ENCODE measurements at regions of chr18 and their contacts with region 1.

Region 1: DNA sequence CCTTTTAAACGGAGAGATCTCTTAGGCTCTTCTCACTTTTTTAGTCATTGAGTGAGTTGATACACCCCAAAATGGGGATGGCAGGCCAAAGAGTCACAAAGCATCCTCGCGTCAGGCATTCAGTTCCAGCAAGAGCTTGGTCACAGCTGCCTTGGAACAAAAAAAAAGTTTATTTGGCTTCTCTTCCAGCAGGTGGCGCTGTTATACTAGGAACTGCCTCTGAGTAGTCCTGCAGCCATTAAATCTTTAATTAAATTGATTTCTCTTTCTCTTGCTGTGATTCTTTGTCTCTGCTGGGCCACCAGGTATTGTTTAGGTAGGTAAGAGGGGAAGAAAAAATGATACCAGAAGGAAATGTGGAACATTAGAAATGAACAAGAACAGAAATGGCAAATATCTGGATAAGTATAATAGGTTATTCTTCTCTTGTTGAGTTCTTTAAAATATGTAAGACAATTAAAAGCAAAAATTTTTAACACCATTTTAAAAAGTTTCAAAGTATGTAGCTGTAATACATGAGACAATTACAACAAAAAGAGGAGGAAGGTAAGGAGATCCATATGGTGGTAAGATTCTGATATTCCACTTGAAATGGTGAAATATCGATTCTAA is 175.1 kb downstream of the GALNT1 start:
- DNase-seq: peak in 1 of 3 donors; percentile 60
- ATAC-seq: peak; percentile 77
- H3K4me3 ChIP-seq: no peak overlapping the region
- H3K4me1 ChIP-seq: no peaks in the 10 kb centered on the region
- CTCF ChIP-seq: peak; percentile 34

Region 2: GRCh38 chr18:35683021-35683420 is 73.6 kb before region 1 on chr18:
- intact Hi-C with region 1: no loop called
- DNase-seq: no peak
- ATAC-seq: no peak
- H3K4me3 ChIP-seq: no peak overlapping the region
- H3K4me1 ChIP-seq: no peaks in the 10 kb centered on the region
- CTCF ChIP-seq: no peak

Region 3: DNA sequence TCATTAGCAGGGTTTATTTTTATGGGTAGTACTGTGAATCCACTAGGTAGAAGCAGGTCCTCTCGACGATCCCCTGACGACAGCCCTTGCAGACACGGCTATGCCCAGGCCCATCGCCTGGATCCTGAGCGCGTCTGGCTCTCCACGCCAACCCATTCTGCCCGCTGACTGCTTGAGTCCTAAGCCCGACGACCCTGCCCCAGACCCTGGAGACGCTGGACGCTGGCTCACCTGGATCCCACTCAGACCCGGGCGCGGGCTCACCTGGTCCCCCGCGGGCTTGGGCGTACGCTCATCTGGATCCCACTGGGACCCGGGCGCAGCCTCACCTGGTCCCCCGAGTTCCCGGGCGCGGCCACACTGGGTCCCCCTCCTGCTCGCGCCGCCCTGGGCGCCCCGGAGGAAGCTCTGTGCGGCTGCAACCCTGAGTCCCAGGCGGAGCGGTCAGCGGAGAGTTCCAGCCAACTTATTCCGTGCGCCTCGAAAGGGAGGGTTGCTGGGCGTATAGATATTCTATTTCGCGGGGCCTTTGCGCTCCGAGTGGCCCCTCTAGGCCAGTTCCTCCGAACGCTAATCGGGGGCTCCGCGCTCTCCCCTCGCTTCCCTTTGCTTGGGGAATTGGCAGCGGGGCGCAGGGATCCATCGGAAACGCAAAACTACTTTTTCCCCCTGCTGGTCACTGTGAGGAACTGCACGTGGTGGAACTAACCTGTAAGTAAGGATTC is 193.5 kb after region 1 on chr18:
- intact Hi-C with region 1: loop called in 1 of 2 experiments (anchors 10 kb)
- DNase-seq: peak in 2 of 3 donors; percentile 47 to 63
- ATAC-seq: peak; percentile 79
- H3K4me3 ChIP-seq: no peak overlapping the region
- H3K4me1 ChIP-seq: no peaks in the 10 kb centered on the region
- CTCF ChIP-seq: peak; percentile 87

Region 4: DNA sequence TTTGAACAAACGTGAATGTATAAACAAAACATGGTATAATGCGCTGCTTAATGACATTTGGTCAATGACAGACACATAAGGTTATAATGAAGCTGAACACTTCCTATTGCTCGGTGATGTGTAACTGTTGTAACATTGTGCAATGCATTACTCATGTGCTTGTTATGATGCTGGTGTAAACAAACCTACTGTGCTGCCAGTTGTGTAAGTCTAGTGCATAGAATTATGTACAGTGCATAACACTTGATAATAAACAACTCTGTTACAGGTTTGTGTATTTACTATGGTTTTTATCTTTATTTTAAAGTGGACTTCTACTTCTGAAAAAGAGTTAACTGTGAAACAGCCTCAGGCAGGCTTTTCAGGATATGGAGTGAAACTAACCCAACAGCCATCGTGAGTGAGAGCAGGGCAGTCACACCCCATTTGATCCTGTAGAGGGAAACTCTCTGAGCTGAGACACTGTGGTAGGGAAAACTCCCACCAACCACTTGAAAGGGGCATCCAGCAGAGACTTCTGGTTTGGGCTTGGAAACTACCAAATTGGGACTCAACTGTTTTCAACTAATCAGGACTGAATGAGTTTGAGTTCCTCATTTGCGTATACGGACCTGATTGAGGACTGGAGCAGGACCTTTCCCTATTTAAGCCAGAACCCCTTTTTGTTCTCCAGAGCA is 319.4 kb after region 1 on chr18:
- intact Hi-C with region 1: no loop called
- DNase-seq: no peak
- ATAC-seq: peak; percentile 64
- H3K4me3 ChIP-seq: no peak overlapping the region
- H3K4me1 ChIP-seq: no peaks in the 10 kb centered on the region
- CTCF ChIP-seq: no peak

Measured in mucosa of descending colon (tissue), 3 donors.